HepG2 (cell line): ENCODE measurements at regions of chr7 and their contacts with region 1.

Region 1: DNA sequence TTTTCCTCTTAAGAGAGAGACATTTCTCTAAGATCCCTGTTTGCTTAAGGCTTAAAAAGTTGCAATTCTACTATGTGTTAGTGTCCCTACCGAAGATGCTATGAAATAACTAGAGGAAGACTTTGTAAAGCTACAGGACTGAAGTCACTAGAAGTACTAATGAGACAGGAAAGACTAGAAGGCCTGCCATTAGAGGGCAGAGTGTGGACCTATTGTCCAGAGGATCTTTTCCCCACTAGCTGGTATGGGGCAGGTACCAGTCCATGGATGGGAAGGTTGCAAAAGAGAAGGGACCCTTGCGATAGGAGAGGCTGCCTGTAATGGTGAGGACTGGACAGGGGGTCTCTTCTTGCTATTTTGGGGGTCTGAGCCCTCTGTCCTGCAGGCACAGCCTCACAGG is 178.1 kb downstream of the TMEM178B start:
- DNase-seq: no peak
- ATAC-seq: peak; percentile 59
- H3K4me3 ChIP-seq: no peak overlapping the region
- H3K27ac ChIP-seq: no peak overlapping the region
- H3K4me1 ChIP-seq: no peaks in the 10 kb centered on the region
- H3K27me3 ChIP-seq: no peaks in the 10 kb centered on the region
- CTCF ChIP-seq: peak; percentile 29
- EP300 ChIP-seq: no peak
- POLR2A ChIP-seq: no peak
- RAD21 ChIP-seq: no peak

Region 2: GRCh38 chr7:141208539-141208938 is 43.4 kb before region 1 on chr7:
- CTCF ChIA-PET with region 1: no interaction called
- POLR2A ChIA-PET with region 1: no interaction called
- in situ Hi-C with region 1: no loop called
- intact Hi-C with region 1: no loop called
- DNase-seq: no peak
- ATAC-seq: no peak
- H3K4me3 ChIP-seq: no peak overlapping the region
- H3K27ac ChIP-seq: no peak overlapping the region
- H3K4me1 ChIP-seq: no peaks in the 10 kb centered on the region
- H3K27me3 ChIP-seq: peaks cover 2 to 5% of the 10 kb centered on the region in 2 experiments; a peak in 1 of 5 replicates
- CTCF ChIP-seq: no peak
- EP300 ChIP-seq: no peak
- POLR2A ChIP-seq: no peak
- RAD21 ChIP-seq: no peak

Region 3: DNA sequence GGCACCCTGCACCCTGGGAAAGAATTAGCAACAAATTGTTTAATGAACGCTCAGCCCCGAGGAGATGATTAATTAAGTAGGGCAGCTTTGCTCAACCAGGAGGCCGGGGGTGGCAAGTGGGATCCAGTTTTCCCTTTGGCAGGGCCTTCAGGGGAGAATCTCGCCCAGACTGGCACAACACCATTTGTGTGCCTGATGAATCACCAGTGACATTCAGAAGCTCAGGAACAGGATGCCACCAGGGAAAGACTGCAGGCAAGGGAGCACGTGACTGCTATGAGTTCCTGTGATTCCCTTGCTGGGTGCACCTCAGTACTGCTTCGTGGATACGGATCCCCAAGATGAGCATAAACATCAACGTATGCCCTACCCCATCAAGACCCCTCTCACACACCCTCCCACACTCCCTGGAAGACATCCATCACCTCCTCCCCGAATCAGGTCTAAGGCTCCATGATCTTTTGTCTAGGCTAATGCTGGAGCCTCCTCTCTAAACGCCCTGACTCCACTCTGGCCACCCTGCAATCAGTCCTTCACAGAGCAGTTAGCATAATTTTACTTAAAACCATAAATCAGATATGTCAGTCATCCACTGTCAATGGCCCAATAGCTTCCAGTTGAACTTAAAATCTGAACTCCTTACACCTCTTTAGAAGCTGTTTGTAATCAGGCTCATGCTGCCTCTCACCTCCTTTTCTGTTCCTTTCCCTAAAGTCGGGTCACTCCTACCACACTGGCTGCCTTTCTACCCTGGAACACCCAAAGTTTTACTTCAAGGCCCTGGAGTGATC is 190.1 kb after region 1 on chr7:
- CTCF ChIA-PET with region 1: no interaction called
- POLR2A ChIA-PET with region 1: no interaction called
- in situ Hi-C with region 1: no loop called
- intact Hi-C with region 1: no loop called
- DNase-seq: no peak
- ATAC-seq: no peak
- H3K4me3 ChIP-seq: no peak overlapping the region
- H3K27ac ChIP-seq: no peak overlapping the region
- H3K4me1 ChIP-seq: no peaks in the 10 kb centered on the region
- H3K27me3 ChIP-seq: peaks cover 1 to 30% of the 10 kb centered on the region in 2 experiments; a peak in 1 of 5 replicates
- CTCF ChIP-seq: no peak
- EP300 ChIP-seq: no peak
- POLR2A ChIP-seq: no peak
- RAD21 ChIP-seq: no peak

Region 4: GRCh38 chr7:141541375-141541774 is 289.4 kb after region 1 on chr7:
- CTCF ChIA-PET with region 1: no interaction called
- POLR2A ChIA-PET with region 1: no interaction called
- in situ Hi-C with region 1: loop called (anchors 10 kb)
- intact Hi-C with region 1: no loop called
- DNase-seq: no peak
- ATAC-seq: no peak
- H3K4me3 ChIP-seq: no peak overlapping the region
- H3K27ac ChIP-seq: no peak overlapping the region
- H3K4me1 ChIP-seq: no peaks in the 10 kb centered on the region
- H3K27me3 ChIP-seq: 0 out of 5 replicates have a peak, but pooled peaks cover 0 to 1% of the 10 kb centered on the region in 2 experiments
- CTCF ChIP-seq: no peak
- EP300 ChIP-seq: no peak
- POLR2A ChIP-seq: no peak
- RAD21 ChIP-seq: no peak